CD8-positive, alpha-beta T cell (primary cell): ENCODE measurements at regions of chr1 and their contacts with region 1.

Region 1: DNA sequence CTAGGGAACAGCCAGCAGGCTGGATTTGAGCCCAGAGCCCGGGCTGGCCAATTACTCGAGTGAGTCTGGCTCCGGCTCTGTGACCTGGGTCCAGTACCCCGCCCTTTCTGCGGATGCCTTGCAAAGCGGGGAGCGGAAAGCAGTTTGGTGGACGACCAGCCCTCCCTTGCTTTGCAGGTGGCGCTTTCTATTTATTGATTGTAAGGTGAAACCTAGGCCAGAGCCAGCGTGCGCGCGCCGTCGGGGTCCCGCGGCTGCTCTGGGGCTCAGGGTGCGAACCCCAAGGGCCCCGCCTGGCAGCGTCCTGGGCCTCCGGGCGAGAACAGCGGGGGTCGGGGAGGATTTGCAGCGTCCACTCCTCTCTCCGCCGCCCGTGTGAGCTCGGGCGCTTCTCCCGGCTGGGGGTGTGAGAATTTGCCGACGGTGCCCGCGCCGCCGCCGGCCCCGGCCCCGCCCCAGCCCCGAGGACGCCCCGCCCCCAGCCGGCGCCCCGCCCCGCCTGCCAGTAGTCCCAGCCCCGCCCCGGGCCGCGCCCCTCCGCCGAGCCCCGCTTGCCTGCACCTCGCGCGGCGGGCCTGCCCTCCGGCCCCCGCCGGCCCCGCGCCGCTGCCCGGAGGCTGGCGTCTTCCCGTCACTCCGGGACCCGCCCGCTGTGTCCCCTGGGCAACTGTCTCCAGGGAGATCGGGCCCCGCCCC is 37.6 kb downstream of the PIK3CD start:
- DNase-seq: peak; percentile 67 to 91 (median 84)
- ATAC-seq: peak; percentile 77
- H3K4me3 ChIP-seq: peak overlapping the region; percentile 55 to 72
- H3K4me3 Mint-ChIP-seq: peak overlapping the region; percentile 81
- H3K27ac ChIP-seq: peak overlapping the region; percentile 33 to 78
- H3K27ac Mint-ChIP-seq: peak overlapping the region; percentile 82
- H3K4me1 ChIP-seq: peaks cover 77% of the 10 kb centered on the region
- H3K4me1 Mint-ChIP-seq: peaks cover 69% of the 10 kb centered on the region
- H3K27me3 ChIP-seq: no peaks in the 10 kb centered on the region
- H3K27me3 Mint-ChIP-seq: no peaks in the 10 kb centered on the region
- CTCF ChIP-seq: no peak

Region 2: GRCh38 chr1:9503001-9503675 is 186.0 kb before region 1 on chr1:
- CTCF ChIA-PET with region 1: no interaction called
- POLR2A ChIA-PET with region 1: no interaction called
- intact Hi-C with region 1: no loop called
- DNase-seq: no peak
- ATAC-seq: no peak
- H3K4me3 ChIP-seq: no peak overlapping the region
- H3K4me3 Mint-ChIP-seq: no peak overlapping the region
- H3K27ac ChIP-seq: no peak overlapping the region
- H3K27ac Mint-ChIP-seq: no peak overlapping the region
- H3K4me1 ChIP-seq: no peaks in the 10 kb centered on the region
- H3K4me1 Mint-ChIP-seq: no peaks in the 10 kb centered on the region
- H3K27me3 ChIP-seq: peaks cover 0 to 2% of the 10 kb centered on the region in 2 experiments
- H3K27me3 Mint-ChIP-seq: no peaks in the 10 kb centered on the region
- CTCF ChIP-seq: no peak

Region 3: GRCh38 chr1:9700340-9700739 is 11.2 kb after region 1 on chr1:
- CTCF ChIA-PET with region 1: interaction called, 15 read pairs
- POLR2A ChIA-PET with region 1: interaction called, 12 read pairs
- intact Hi-C with region 1: no loop called
- DNase-seq: no peak
- ATAC-seq: no peak
- H3K4me3 ChIP-seq: no peak overlapping the region
- H3K4me3 Mint-ChIP-seq: no peak overlapping the region
- H3K27ac ChIP-seq: no peak overlapping the region
- H3K27ac Mint-ChIP-seq: peak overlapping the region; percentile 86
- H3K4me1 ChIP-seq: peaks cover 49% of the 10 kb centered on the region
- H3K4me1 Mint-ChIP-seq: peaks cover 68% of the 10 kb centered on the region
- H3K27me3 ChIP-seq: no peaks in the 10 kb centered on the region
- H3K27me3 Mint-ChIP-seq: no peaks in the 10 kb centered on the region
- CTCF ChIP-seq: no peak

Region 4: GRCh38 chr1:9705337-9706093 is 16.4 kb after region 1 on chr1:
- CTCF ChIA-PET with region 1: interaction called, 15 read pairs
- POLR2A ChIA-PET with region 1: interaction called, 12 read pairs
- intact Hi-C with region 1: loop called in 1 of 2 experiments (anchors 2 kb)
- DNase-seq: no peak
- ATAC-seq: no peak
- H3K4me3 ChIP-seq: no peak overlapping the region
- H3K4me3 Mint-ChIP-seq: peak overlapping the region; percentile 30
- H3K27ac ChIP-seq: peak overlapping the region in 1 of 2 experiments; percentile 41
- H3K27ac Mint-ChIP-seq: peak overlapping the region; percentile 87
- H3K4me1 ChIP-seq: peaks cover 64% of the 10 kb centered on the region
- H3K4me1 Mint-ChIP-seq: peaks cover 67% of the 10 kb centered on the region
- H3K27me3 ChIP-seq: no peaks in the 10 kb centered on the region
- H3K27me3 Mint-ChIP-seq: no peaks in the 10 kb centered on the region
- CTCF ChIP-seq: no peak

Region 5: DNA sequence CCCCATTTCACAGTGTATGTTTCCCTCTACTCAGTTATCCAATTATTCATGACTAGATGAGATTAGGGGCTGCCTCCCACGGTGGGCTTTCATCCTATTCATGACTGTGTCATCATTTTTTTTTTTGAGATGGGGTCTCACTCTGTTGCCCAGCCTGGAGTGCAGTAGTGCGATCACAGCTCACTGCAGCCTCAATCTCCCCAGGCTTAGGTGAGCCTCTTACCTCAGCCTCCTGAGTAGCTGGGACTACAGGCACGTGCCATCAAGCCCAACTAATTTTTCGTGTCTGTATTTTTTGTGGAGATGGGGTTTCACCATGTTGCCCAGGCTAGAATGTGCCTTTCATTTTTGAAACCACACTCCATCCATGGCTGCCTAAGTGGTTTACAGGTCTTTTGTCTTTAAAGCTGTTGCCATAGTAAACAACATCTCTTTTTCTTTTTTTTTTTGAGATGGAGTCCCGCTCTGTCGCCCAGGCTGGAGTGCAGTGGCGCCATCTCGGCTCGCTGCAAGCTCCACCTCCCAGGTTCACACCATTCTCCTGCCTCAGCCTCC is 22.4 kb after region 1 on chr1:
- CTCF ChIA-PET with region 1: interaction called, 14 read pairs
- POLR2A ChIA-PET with region 1: interaction called, 116 read pairs
- intact Hi-C with region 1: loop called (anchors 2 kb)
- DNase-seq: peak in 2 of 9 experiments; percentile 60 to 75
- ATAC-seq: no peak
- H3K4me3 ChIP-seq: no peak overlapping the region
- H3K4me3 Mint-ChIP-seq: no peak overlapping the region
- H3K27ac ChIP-seq: peak overlapping the region; percentile 4 to 7
- H3K27ac Mint-ChIP-seq: peak overlapping the region; percentile 70
- H3K4me1 ChIP-seq: peaks cover 62% of the 10 kb centered on the region
- H3K4me1 Mint-ChIP-seq: peaks cover 58% of the 10 kb centered on the region
- H3K27me3 ChIP-seq: no peaks in the 10 kb centered on the region
- H3K27me3 Mint-ChIP-seq: no peaks in the 10 kb centered on the region
- CTCF ChIP-seq: no peak

Region 6: DNA sequence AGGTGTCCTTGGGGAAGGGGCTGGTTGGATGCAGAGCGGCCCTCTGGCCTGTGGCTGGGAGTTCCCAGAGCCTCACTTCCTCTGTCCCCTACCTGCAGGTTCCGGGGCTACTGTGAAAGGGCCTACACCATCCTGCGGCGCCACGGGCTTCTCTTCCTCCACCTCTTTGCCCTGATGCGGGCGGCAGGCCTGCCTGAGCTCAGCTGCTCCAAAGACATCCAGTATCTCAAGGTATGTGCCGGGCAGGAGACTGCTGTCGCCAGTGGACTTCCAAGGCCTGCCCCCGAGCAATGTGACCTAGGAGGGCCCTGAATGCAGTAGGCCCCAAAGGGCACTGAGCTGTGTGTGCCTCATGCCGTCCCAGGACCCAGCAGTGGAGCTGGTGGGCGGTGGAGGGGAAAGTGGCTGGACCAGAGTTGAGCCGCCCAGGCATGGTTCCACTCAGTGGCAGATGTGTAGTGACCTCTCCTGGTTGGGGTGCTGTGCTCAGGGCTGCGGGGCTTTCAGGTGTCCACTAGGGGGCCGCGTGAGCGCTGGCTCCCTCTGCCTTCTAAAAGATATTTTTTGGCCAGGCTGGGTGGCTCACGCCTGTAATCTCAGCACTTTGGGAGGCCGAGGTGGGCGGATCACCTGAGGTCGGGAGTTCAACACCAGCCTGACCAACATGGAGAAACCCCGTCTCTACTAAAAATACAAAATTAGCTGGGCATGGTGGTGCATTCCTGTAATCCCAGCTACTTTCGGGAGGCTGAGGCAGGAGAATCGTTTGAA is 35.7 kb after region 1 on chr1:
- CTCF ChIA-PET with region 1: interaction called, 7 read pairs
- POLR2A ChIA-PET with region 1: interaction called, 3 read pairs
- intact Hi-C with region 1: loop called in 1 of 2 experiments (anchors 5 kb)
- DNase-seq: peak; percentile 47 to 84 (median 75)
- ATAC-seq: peak; percentile 47
- H3K4me3 ChIP-seq: no peak overlapping the region
- H3K4me3 Mint-ChIP-seq: peak overlapping the region; percentile 8
- H3K27ac ChIP-seq: peak overlapping the region in 1 of 2 experiments; percentile 16
- H3K27ac Mint-ChIP-seq: peak overlapping the region; percentile 80
- H3K4me1 ChIP-seq: peaks cover 82% of the 10 kb centered on the region
- H3K4me1 Mint-ChIP-seq: peaks cover 71% of the 10 kb centered on the region
- H3K27me3 ChIP-seq: no peaks in the 10 kb centered on the region
- H3K27me3 Mint-ChIP-seq: no peaks in the 10 kb centered on the region
- CTCF ChIP-seq: peak; percentile 97

Region 7: GRCh38 chr1:10007169-10007568 is 318.0 kb after region 1 on chr1:
- CTCF ChIA-PET with region 1: no interaction called
- POLR2A ChIA-PET with region 1: no interaction called
- intact Hi-C with region 1: no loop called
- DNase-seq: no peak
- ATAC-seq: no peak
- H3K4me3 ChIP-seq: no peak overlapping the region
- H3K4me3 Mint-ChIP-seq: no peak overlapping the region
- H3K27ac ChIP-seq: no peak overlapping the region
- H3K27ac Mint-ChIP-seq: no peak overlapping the region
- H3K4me1 ChIP-seq: no peaks in the 10 kb centered on the region
- H3K4me1 Mint-ChIP-seq: no peaks in the 10 kb centered on the region
- H3K27me3 ChIP-seq: peaks cover 0 to 7% of the 10 kb centered on the region in 2 experiments
- H3K27me3 Mint-ChIP-seq: peaks cover 7% of the 10 kb centered on the region
- CTCF ChIP-seq: no peak